Mammary epithelial cell (primary cell): ENCODE measurements at regions of chr12 and their contacts with region 1.

Region 1: GRCh38 chr12:45415393-45415817 is 199.5 kb downstream of the ANO6 start:
- DNase-seq: peak; percentile 99
- H3K4me3 ChIP-seq: no peak overlapping the region
- H3K27ac ChIP-seq: peak overlapping the region; percentile 31
- H3K4me1 ChIP-seq: peaks cover 7% of the 10 kb centered on the region
- H3K27me3 ChIP-seq: no peaks in the 10 kb centered on the region
- CTCF ChIP-seq: no peak

Region 2: GRCh38 chr12:45234139-45234846 is 181.1 kb before region 1 on chr12:
- CTCF ChIA-PET with region 1: no interaction called
- dilution Hi-C with region 1: no loop called
- in situ Hi-C with region 1: no loop called
- intact Hi-C with region 1: loop called (anchors 1 kb)
- DNase-seq: peak; percentile 96
- H3K4me3 ChIP-seq: peak overlapping the region in 1 of 3 experiments; percentile 28
- H3K27ac ChIP-seq: peak overlapping the region; percentile 98
- H3K4me1 ChIP-seq: peaks cover 51% of the 10 kb centered on the region
- H3K27me3 ChIP-seq: no peaks in the 10 kb centered on the region
- CTCF ChIP-seq: no peak

Region 3: GRCh38 chr12:45509187-45509586 is 93.8 kb after region 1 on chr12:
- CTCF ChIA-PET with region 1: no interaction called
- dilution Hi-C with region 1: no loop called
- in situ Hi-C with region 1: no loop called
- intact Hi-C with region 1: no loop called
- DNase-seq: peak; percentile 48
- H3K4me3 ChIP-seq: no peak overlapping the region
- H3K27ac ChIP-seq: no peak overlapping the region
- H3K4me1 ChIP-seq: peaks cover 3% of the 10 kb centered on the region
- H3K27me3 ChIP-seq: no peaks in the 10 kb centered on the region
- CTCF ChIP-seq: no peak